Activated B cell treated with CpG ODN at 0.5 μM for 24 hours (primary cell): ENCODE measurements at regions of chr4 and their contacts with region 1.

Region 1: GRCh38 chr4:184851200-184851541 is 25.4 kb upstream of the ACSL1 start:
- DNase-seq: no peak
- ATAC-seq: peak; percentile 71
- H3K4me3 Mint-ChIP-seq: no peak overlapping the region
- H3K27ac Mint-ChIP-seq: no peak overlapping the region
- H3K4me1 Mint-ChIP-seq: peaks cover 38% of the 10 kb centered on the region
- H3K27me3 Mint-ChIP-seq: no peaks in the 10 kb centered on the region
- CTCF ChIP-seq: no peak

Region 2: DNA sequence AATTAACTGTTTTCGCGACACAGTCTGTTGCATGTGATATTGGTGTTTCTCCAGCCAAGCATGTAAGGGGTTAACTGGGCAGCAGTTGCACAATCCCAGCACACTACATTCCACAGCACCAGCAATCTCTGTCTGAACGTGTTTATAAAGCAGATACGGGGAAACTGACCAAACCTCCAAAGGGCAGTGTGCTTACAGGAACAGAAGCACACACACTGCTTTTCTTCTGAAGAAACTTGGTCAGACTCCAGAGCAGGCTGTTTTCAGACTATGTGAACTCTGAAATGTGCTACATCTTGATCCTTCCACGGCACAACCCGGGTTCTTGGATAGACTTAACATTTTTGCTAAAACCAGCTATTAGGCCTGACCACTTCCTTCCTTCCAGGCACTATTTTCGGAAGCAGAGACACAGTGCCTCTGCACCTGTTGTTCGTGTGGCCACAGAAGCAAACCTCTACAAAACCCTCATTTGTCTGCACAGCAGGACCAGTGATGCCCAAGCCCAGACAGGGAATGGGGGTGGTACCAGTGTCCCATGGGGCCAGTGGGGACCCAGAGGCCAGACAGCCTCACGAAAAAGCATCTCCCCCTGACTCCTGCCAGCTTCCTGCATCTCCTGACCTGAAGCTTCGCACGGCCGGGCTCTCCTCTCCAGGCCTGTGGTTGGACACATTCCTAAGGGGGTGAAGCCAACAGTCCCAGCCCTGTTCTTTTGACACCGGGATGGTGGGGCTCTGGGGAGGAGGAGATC is 466.9 kb before region 1 on chr4:
- CTCF ChIA-PET with region 1: no interaction called
- POLR2A ChIA-PET with region 1: no interaction called
- intact Hi-C with region 1: loop called (anchors 10 kb)
- DNase-seq: no peak
- ATAC-seq: peak; percentile 36
- H3K4me3 Mint-ChIP-seq: peak overlapping the region; percentile 72
- H3K27ac Mint-ChIP-seq: peak overlapping the region; percentile 79
- H3K4me1 Mint-ChIP-seq: peaks cover 88% of the 10 kb centered on the region
- H3K27me3 Mint-ChIP-seq: no peaks in the 10 kb centered on the region
- CTCF ChIP-seq: no peak

Region 3: GRCh38 chr4:184612074-184612473 is 239.1 kb before region 1 on chr4:
- CTCF ChIA-PET with region 1: no interaction called
- POLR2A ChIA-PET with region 1: no interaction called
- intact Hi-C with region 1: no loop called
- DNase-seq: no peak
- ATAC-seq: no peak
- H3K4me3 Mint-ChIP-seq: no peak overlapping the region
- H3K27ac Mint-ChIP-seq: no peak overlapping the region
- H3K4me1 Mint-ChIP-seq: peaks cover 6% of the 10 kb centered on the region
- H3K27me3 Mint-ChIP-seq: no peaks in the 10 kb centered on the region
- CTCF ChIP-seq: no peak

Region 4: DNA sequence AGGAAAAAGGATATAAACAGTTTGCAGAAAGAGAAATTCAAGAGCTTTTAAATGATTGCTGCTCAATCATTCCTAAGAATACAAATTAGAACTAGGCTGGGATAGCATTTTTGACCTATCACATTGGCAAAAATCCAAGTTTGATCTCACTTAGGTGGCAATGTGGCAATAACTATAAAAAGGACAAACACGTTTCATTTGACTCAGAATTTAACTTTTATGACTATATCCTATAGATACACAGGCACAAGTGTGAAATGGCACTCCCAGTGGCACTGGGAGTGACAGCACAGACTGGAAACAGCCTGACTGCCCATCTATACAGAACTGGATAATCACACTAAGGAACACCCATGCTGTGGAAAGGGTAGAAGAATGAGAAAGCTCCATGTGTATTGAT is 128.4 kb before region 1 on chr4:
- CTCF ChIA-PET with region 1: no interaction called
- POLR2A ChIA-PET with region 1: no interaction called
- intact Hi-C with region 1: no loop called
- DNase-seq: no peak
- ATAC-seq: no peak
- H3K4me3 Mint-ChIP-seq: no peak overlapping the region
- H3K27ac Mint-ChIP-seq: no peak overlapping the region
- H3K4me1 Mint-ChIP-seq: peaks cover 16% of the 10 kb centered on the region
- H3K27me3 Mint-ChIP-seq: no peaks in the 10 kb centered on the region
- CTCF ChIP-seq: no peak

Region 5: GRCh38 chr4:184805462-184806228 is 45.5 kb before region 1 on chr4:
- CTCF ChIA-PET with region 1: no interaction called
- POLR2A ChIA-PET with region 1: interaction called, 8 read pairs
- intact Hi-C with region 1: loop called (anchors 1 kb)
- DNase-seq: peak; percentile 26
- ATAC-seq: peak; percentile 89
- H3K4me3 Mint-ChIP-seq: peak overlapping the region; percentile 33
- H3K27ac Mint-ChIP-seq: peak overlapping the region; percentile 54
- H3K4me1 Mint-ChIP-seq: peaks cover 39% of the 10 kb centered on the region
- H3K27me3 Mint-ChIP-seq: no peaks in the 10 kb centered on the region
- CTCF ChIP-seq: no peak

Region 6: GRCh38 chr4:184896868-184897715 is 45.9 kb after region 1 on chr4:
- CTCF ChIA-PET with region 1: no interaction called
- POLR2A ChIA-PET with region 1: interaction called, 15 read pairs
- intact Hi-C with region 1: loop called (anchors 1 kb)
- DNase-seq: peak; percentile 38
- ATAC-seq: peak; percentile 84
- H3K4me3 Mint-ChIP-seq: peak overlapping the region; percentile 78
- H3K27ac Mint-ChIP-seq: peak overlapping the region; percentile 80
- H3K4me1 Mint-ChIP-seq: peaks cover 45% of the 10 kb centered on the region
- H3K27me3 Mint-ChIP-seq: peaks cover 9% of the 10 kb centered on the region
- CTCF ChIP-seq: no peak

Region 7: GRCh38 chr4:185134307-185134869 is 283.2 kb after region 1 on chr4:
- CTCF ChIA-PET with region 1: no interaction called
- POLR2A ChIA-PET with region 1: no interaction called
- intact Hi-C with region 1: no loop called
- DNase-seq: no peak
- ATAC-seq: peak; percentile 56
- H3K4me3 Mint-ChIP-seq: no peak overlapping the region
- H3K27ac Mint-ChIP-seq: no peak overlapping the region
- H3K4me1 Mint-ChIP-seq: no peaks in the 10 kb centered on the region
- H3K27me3 Mint-ChIP-seq: peaks cover 9% of the 10 kb centered on the region
- CTCF ChIP-seq: no peak

Region 8: GRCh38 chr4:185203486-185204237 is 352.5 kb after region 1 on chr4 and contains the start of gene CFAP97:
- CTCF ChIA-PET with region 1: no interaction called
- POLR2A ChIA-PET with region 1: no interaction called
- intact Hi-C with region 1: loop called (anchors 10 kb)
- DNase-seq: peak; percentile 82
- ATAC-seq: peak; percentile 81
- H3K4me3 Mint-ChIP-seq: peak within 1 kb of the TSS; percentile 93
- H3K27ac Mint-ChIP-seq: peak within 1 kb of the TSS; percentile 97
- H3K4me1 Mint-ChIP-seq: peaks cover 47% of the 10 kb centered on the region
- H3K27me3 Mint-ChIP-seq: no peaks in the 10 kb centered on the region
- CTCF ChIP-seq: no peak
- total RNA-seq, gene CFAP97: 42.6 and 44.1 TPM in 2 replicates